ENCODE measurements at regions of chr18 and their contacts with region 1.

Region 1: GRCh38 chr18:64872710-64873458 is 724.0 kb upstream of the LINC00305 start:
- DNase-seq: no peak
- ATAC-seq: peak in 3 of 8 donors; percentile 52 to 56 (median 55)
- H3K4me3 ChIP-seq: no peak overlapping the region
- H3K27ac ChIP-seq: no peak overlapping the region
- H3K4me1 ChIP-seq: peaks cover 0 to 6% (median 0%) of the 10 kb centered on the region in 9 donors
- H3K27me3 ChIP-seq: no peaks in the 10 kb centered on the region
- CTCF ChIP-seq: no peak

Region 2: DNA sequence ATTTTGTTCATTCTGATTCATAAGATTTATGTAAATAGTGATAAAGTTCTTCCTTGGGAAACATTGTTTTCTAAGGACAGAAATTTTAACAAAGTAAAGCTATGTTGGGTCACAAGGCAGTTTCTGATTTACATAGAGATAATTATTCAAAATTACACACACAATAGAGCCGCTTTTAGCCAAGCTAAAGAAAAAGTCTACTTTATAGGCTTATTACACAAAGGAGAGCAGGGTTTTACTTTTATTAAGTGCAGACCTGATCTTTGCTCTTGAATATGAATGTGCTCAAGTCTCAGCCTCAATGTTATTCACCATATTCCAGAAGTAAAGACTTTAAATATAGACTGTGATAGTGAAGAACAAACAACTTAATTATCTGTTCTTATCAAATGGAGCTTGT is 63.8 kb after region 1 on chr18:
- intact Hi-C with region 1: loop called in 1 of 10 experiments (anchors 10 kb)
- DNase-seq: no peak
- ATAC-seq: no peak
- H3K4me3 ChIP-seq: no peak overlapping the region
- H3K27ac ChIP-seq: no peak overlapping the region
- H3K4me1 ChIP-seq: no peaks in the 10 kb centered on the region
- H3K27me3 ChIP-seq: no peaks in the 10 kb centered on the region
- CTCF ChIP-seq: no peak

Measured in heart right ventricle (tissue), 16 donors.